ENCODE measurements at regions of chr4 and their contacts with region 1.

Region 1: DNA sequence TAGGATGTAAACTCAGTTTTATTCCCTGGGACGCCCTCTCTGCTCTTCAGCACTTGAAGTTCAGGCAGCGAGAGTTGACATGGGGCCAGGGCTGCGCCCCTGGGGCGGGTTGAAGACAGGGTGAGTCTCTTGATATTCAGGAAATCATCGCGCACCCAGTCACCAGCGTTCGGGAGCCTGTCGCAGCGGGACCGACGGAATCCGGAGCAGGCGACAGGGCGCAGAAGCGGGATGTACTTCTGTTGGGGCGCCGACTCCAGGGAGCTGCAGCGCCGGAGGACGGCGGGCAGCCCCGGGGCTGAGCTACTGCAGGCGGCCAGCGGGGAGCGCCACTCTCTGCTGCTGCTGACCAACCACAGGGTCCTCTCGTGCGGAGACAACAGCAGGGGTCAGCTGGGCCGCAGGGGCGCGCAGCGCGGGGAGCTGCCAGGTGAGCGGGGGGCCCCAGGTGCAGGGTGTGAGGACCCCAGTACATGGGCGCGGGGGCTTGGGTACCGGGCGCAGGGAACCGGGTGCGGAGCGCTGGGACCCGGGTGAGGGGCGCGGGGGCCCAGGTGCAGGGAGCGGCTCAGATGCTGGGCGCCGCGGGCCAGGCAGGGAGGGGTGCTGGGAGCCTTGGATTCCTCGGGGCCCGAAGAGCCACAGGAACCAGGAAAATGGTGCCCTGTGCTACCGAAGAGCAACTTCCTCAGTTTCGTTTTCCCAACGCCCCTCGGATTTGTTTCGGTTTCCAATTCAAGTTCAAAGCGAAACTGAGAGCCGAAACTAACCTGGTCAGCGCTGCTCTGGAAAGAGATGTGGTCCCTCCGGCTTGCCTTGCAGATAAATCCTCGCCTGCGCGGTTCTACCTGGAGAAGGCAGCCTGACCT is at the start of gene HERC6:
- DNase-seq: peak; percentile 81 to 93 (median 86)
- ATAC-seq: peak; percentile 98
- H3K4me3 ChIP-seq: peak within 1 kb of the TSS; percentile 81 to 92
- H3K27ac ChIP-seq: peak within 1 kb of the TSS; percentile 98
- H3K4me1 ChIP-seq: peaks cover 0 to 8% of the 10 kb centered on the region in 2 donors
- H3K27me3 ChIP-seq: no peaks in the 10 kb centered on the region
- CTCF ChIP-seq: peak; percentile 75 to 78
- polyA plus RNA-seq, gene HERC6: 10.7 to 15.9 (median 12.5) TPM

Region 2: DNA sequence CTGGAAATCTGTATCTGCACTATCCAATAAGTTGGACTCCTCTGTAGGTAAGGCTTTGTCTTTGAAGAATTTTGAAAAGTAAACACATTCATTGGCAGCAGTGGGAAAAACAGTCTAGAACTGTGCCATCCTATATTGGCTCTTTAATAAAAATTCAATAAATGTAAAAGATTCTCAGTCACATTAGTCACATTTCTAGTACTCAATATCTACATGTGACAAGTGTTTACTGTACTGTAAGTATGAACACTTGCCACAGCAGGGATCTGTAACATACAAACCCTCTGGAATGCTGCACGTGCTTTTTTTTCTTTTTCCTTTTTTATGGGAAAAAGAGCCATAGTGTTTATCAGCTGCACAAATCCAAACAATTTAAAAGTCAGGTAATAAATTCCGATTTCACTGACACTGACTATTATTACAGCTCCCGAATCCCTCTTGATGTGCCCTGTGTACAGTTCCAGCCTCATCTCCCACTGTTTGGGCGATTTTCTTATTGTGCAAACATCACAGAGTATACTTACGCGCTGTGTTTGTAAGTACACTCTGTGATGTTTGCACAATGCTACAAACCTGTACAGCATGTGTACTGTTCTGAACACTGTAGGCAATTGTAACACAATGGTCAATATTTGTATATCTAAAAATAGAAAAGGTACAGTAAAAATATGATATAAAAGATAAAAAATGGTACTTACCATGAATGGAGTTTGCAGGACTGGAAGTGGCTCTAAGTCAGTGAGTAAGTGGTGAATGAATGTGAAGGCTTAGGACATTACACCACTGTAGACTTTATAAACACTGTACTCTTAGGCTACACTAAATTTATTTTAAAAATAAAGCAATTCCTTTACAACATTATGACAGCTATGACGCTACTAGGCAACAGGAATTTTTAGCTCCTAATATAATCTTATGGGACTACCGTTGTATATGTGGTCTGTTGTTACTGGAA is 135.9 kb after region 1 on chr4:
- intact Hi-C with region 1: loop called in 1 of 2 experiments (anchors 10 kb)
- DNase-seq: peak in 2 of 4 donors; percentile 10 to 44
- ATAC-seq: peak; percentile 91
- H3K4me3 ChIP-seq: no peak overlapping the region
- H3K27ac ChIP-seq: no peak overlapping the region
- H3K4me1 ChIP-seq: peaks cover 0 to 5% of the 10 kb centered on the region in 2 donors
- H3K27me3 ChIP-seq: no peaks in the 10 kb centered on the region
- CTCF ChIP-seq: no peak

Region 3: DNA sequence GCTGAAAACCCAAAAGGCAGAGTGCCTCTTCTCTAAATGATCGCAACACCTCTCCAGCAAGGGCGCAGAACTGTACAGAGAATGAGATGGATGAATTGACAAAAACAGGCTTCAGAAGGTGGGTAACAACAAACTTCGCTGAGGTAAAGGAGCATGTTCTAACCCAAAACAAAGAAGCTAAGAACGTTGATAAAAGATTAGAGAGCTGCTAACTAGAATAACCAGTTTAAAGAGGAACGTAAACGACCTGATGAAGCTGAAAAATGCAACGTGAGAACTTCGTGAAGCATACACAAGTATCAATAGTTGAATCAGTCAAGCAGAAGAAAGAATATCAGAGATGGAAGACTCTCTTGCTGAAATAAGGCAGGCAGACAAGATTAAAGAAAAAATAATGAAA is 256.1 kb after region 1 on chr4:
- intact Hi-C with region 1: no loop called
- DNase-seq: no peak
- ATAC-seq: no peak
- H3K4me3 ChIP-seq: no peak overlapping the region
- H3K27ac ChIP-seq: no peak overlapping the region
- H3K4me1 ChIP-seq: no peaks in the 10 kb centered on the region
- H3K27me3 ChIP-seq: no peaks in the 10 kb centered on the region
- CTCF ChIP-seq: no peak